Psoas muscle (tissue), 8 donors: ENCODE measurements at regions of chr18 and their contacts with region 1.

Region 1: DNA sequence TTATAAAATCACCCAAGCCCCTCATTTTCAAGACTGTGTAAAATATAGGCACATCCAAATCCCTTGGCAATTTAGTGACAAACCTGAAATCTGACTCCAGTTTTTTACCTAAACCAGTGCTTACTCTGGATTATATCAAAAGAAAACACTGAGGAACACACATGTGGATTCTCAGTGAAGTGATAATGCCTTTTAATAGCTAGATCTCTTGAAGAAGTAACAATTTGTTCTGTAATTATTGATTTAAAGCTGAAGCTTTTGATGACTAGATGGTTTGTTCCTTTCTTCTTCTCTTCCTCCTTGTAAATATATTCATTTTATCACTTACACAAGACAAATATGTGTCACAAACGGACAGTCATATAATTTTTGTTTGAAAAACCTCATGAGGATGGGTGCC is 894.6 kb downstream of the DCC start:
- DNase-seq: no peak
- ATAC-seq: no peak
- H3K4me3 ChIP-seq: no peak overlapping the region
- H3K27ac ChIP-seq: no peak overlapping the region
- H3K4me1 ChIP-seq: no peaks in the 10 kb centered on the region
- H3K27me3 ChIP-seq: no peaks in the 10 kb centered on the region
- CTCF ChIP-seq: no peak

Region 2: GRCh38 chr18:52531836-52532235 is 702.8 kb before region 1 on chr18:
- intact Hi-C with region 1: loop called in 1 of 2 experiments (anchors 5 kb)
- DNase-seq: no peak
- ATAC-seq: no peak
- H3K4me3 ChIP-seq: no peak overlapping the region
- H3K27ac ChIP-seq: no peak overlapping the region
- H3K4me1 ChIP-seq: no peaks in the 10 kb centered on the region
- H3K27me3 ChIP-seq: no peaks in the 10 kb centered on the region
- CTCF ChIP-seq: no peak